Activated T-helper 1 cell treated with anti-CD3 and anti-CD28 coated beads, Interleukin-12 subunit alpha, Interleukin-12 subunit beta, Interleukin-2, Interleukin-4 antibody, amounts not matched to agents 30 ng/mL and 10 ng/mL and 1 ng/mL, durations not matched to agents 14 hours and 24 hours and 36 hours (primary cell): ENCODE measurements at regions of chr7 and their contacts with region 1.

Region 1: GRCh38 chr7:27921081-27921836 is 181.3 kb downstream of the TAX1BP1 start:
- DNase-seq: no peak
- H3K4me3 Mint-ChIP-seq: no peak overlapping the region
- H3K27ac Mint-ChIP-seq: no peak overlapping the region
- H3K4me1 Mint-ChIP-seq: peaks cover 10% of the 10 kb centered on the region
- H3K27me3 Mint-ChIP-seq: peaks cover 2% of the 10 kb centered on the region

Region 2: DNA sequence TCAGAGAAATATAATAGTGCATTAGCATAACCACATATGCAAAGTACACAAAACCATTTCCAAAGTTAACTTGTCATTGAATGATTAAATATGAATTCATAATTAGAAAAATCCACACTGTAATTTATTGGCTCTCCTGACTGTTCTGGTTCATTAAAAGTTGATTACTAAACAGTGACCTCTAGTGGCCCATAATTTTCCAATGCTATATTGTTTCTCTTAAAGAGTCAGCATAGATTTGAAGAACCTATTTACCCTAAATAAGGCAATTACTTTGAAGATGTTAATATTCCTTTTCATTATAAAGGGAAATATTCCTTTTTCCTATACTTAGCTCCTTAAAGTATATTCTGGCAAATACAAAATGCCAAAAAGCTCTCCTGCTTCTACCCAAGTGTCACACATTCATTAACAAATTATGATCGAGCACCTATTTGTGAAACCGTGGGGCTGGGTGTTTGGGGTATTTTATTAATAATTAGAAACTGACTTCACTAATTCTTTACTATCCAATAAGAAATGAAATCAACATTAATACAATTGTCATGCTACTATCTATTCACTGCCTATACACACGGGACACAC is 344.8 kb before region 1 on chr7:
- intact Hi-C with region 1: loop called (anchors 2 kb)
- DNase-seq: no peak
- H3K4me3 Mint-ChIP-seq: no peak overlapping the region
- H3K27ac Mint-ChIP-seq: no peak overlapping the region
- H3K4me1 Mint-ChIP-seq: no peaks in the 10 kb centered on the region
- H3K27me3 Mint-ChIP-seq: peaks cover 5% of the 10 kb centered on the region

Region 3: GRCh38 chr7:27745064-27745583 is 176.1 kb before region 1 on chr7:
- intact Hi-C with region 1: loop called (anchors 5 kb)
- DNase-seq: no peak
- H3K4me3 Mint-ChIP-seq: no peak overlapping the region
- H3K27ac Mint-ChIP-seq: no peak overlapping the region
- H3K4me1 Mint-ChIP-seq: peaks cover 39% of the 10 kb centered on the region
- H3K27me3 Mint-ChIP-seq: no peaks in the 10 kb centered on the region

Region 4: DNA sequence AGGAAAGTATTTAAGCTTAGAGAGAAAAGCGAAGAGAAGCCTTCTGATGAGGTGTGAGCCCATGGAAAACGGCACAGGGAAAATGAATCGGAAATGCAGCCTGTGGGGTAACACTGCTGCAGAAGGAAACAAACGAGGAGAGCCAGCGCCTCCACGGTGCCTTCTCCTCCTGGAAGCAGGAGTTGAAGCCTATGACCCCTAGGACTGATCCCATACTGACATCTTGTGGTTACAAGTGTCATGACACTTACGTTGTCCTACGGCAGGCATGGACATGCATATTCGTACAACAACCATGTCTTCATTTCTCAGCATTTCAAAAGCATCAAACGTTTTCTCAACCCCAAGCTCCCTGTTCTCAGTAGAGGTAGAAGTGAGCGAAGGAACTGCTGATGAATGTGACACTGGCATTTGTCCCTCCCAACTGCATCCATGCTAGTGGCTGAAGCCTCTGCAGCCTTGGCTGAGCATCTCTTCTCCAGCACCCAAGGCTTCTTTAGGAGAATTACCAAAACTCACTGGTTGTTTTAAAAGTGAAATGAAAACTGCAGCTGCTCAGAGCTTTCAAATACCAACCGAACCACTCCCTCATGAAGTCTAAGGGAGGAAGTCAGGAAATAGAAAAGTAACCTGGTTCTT is 99.2 kb after region 1 on chr7:
- intact Hi-C with region 1: loop called (anchors 1 kb)
- DNase-seq: peak; percentile 26
- H3K4me3 Mint-ChIP-seq: no peak overlapping the region
- H3K27ac Mint-ChIP-seq: no peak overlapping the region
- H3K4me1 Mint-ChIP-seq: peaks cover 7% of the 10 kb centered on the region
- H3K27me3 Mint-ChIP-seq: peaks cover 7% of the 10 kb centered on the region